Natural killer cell (primary cell): ENCODE measurements at regions of chr15 and their contacts with region 1.

Region 1: DNA sequence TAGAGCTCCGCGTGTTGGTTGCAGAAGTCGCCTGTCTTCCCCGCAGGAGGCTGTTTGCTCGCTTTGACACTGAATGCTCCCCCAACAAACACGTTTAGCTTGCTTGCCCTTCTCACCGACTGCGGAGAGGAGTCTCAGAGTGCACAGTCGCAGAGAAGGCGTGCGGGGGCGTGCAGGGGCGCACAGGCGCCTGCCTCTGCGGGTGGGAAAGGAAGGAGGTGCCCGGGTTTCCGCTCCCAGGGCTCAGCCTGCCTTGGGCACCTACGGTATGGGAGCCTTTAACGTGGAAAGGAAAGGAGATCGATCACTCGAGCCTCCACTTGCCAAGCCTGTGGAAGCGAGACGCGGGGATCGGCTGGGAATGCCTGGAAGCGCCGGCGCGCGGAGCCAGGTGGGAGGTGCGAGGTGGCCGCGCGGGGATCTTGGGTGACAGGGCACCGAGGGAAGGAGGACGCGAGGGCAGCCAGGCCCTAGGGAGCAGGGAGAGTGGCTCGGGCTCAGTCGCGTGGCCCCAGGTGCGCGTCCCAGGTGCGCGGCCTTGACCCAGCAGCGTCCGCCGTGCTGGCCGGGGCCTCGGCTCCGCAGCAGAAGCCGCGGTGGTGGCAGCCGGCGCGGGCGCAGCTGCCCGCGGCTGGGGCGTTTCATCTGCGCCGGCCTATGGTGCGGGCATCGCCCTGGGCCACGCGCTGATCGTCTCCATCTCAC is at the start of gene FAN1:
- DNase-seq: peak; percentile 37 to 81
- ATAC-seq: peak; percentile 84 to 85 (median 85)
- H3K4me3 ChIP-seq: peak within 1 kb of the TSS; percentile 53
- H3K4me3 Mint-ChIP-seq: peak within 1 kb of the TSS; percentile 100
- H3K27ac ChIP-seq: peak within 1 kb of the TSS; percentile 27
- H3K27ac Mint-ChIP-seq: peak within 1 kb of the TSS; percentile 79 to 95
- H3K4me1 ChIP-seq: peaks cover 8% of the 10 kb centered on the region
- H3K4me1 Mint-ChIP-seq: peaks cover 34% of the 10 kb centered on the region in 2 donors
- H3K27me3 ChIP-seq: no peaks in the 10 kb centered on the region
- H3K27me3 Mint-ChIP-seq: peaks cover 0 to 8% of the 10 kb centered on the region in 2 donors
- CTCF ChIP-seq: no peak
- total RNA-seq, gene FAN1: 9.1 to 18.8 (median 15.3) TPM

Region 2: DNA sequence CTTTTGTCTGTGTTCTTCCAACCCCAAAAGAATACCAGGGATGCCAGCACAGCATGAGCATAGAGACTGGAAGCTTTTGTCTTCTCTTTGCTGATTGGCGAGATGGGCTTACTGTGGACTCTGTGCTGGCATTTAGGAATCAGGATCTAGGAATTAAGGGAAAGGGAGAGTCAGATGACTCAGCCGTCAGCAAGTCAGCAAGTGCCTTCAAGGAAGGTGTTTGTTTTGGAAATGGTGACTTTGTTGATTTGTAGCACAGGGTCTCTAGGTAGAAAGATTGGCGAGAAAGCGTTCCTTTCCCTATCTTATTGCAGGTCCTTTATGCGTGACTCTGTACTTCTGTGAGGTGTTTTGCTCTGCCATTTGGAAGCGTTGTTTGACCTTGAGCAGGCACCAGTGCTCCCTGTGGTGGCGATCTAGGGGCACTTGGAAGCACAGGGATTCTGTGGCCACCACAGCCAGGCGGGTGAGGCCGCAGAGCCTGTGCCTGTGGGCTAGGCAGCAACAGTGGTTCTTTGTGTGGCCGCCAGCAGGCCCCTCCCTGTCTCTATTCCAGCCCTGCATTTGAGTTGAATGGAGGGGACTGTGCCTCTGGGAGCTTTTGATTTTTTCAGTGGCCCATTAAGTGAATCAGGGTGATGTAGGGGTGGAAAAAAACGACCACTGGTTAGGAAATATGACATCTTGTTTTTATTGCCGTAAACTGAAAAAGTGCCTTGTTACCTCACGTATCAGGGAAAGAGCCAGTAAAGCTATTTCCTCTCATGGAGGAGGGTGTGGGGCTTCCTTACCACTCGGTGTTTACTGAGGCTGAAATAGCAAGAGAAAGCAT is 19.0 kb after region 1 on chr15:
- intact Hi-C with region 1: no loop called
- DNase-seq: no peak
- ATAC-seq: no peak
- H3K4me3 ChIP-seq: no peak overlapping the region
- H3K4me3 Mint-ChIP-seq: no peak overlapping the region
- H3K27ac ChIP-seq: no peak overlapping the region
- H3K27ac Mint-ChIP-seq: no peak overlapping the region
- H3K4me1 ChIP-seq: no peaks in the 10 kb centered on the region
- H3K4me1 Mint-ChIP-seq: no peaks in the 10 kb centered on the region
- H3K27me3 ChIP-seq: no peaks in the 10 kb centered on the region
- H3K27me3 Mint-ChIP-seq: no peaks in the 10 kb centered on the region
- CTCF ChIP-seq: no peak

Region 3: DNA sequence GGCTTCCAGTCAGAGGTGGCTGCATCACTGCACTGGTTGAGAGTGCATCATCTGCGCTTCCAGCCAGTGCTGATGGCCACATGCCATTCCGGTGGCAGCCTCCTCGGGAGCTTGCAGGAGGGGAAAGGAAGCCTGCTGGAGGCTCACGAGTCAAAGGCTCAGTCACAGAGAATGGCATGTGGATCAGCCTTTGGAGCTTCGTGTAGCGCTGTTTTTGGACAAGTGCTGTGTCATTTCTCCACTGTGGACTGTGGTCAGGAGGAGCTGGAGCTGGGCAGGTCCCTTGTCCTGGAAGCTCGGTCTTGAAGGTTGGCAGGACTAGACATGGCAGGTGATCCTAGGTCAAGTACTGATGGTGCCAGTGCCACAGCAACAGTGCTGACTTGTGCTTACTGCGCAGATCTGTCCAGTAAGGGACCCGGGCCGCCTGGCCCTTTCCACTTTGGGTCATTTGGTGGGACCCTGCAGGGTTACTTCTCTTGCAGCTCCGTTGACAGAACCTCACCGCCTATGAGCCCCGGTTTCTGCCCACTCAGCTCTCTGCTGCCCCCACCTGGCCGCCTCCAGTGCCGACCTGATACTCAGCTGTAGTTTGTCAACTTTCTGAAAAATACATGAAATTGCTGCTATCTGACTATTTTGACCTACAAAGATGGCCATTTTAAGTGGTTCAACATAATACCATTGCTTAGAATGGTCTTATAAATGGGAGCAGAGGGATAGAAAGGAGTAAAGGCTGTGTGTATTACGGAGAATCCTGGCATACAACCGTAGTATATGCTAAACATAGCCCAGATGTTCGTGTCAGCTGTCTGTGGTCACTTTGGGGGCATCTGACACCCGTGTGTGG is 225.5 kb after region 1 on chr15:
- intact Hi-C with region 1: loop called (anchors 10 kb)
- DNase-seq: peak; percentile 79 to 80
- ATAC-seq: peak; percentile 84 to 99 (median 99)
- H3K4me3 ChIP-seq: no peak overlapping the region
- H3K4me3 Mint-ChIP-seq: no peak overlapping the region
- H3K27ac ChIP-seq: no peak overlapping the region
- H3K27ac Mint-ChIP-seq: no peak overlapping the region
- H3K4me1 ChIP-seq: peaks cover 7% of the 10 kb centered on the region
- H3K4me1 Mint-ChIP-seq: peaks cover 14 to 17% of the 10 kb centered on the region in 2 donors
- H3K27me3 ChIP-seq: no peaks in the 10 kb centered on the region
- H3K27me3 Mint-ChIP-seq: peaks cover 0 to 4% of the 10 kb centered on the region in 2 donors
- CTCF ChIP-seq: peak; percentile 97

Region 4: DNA sequence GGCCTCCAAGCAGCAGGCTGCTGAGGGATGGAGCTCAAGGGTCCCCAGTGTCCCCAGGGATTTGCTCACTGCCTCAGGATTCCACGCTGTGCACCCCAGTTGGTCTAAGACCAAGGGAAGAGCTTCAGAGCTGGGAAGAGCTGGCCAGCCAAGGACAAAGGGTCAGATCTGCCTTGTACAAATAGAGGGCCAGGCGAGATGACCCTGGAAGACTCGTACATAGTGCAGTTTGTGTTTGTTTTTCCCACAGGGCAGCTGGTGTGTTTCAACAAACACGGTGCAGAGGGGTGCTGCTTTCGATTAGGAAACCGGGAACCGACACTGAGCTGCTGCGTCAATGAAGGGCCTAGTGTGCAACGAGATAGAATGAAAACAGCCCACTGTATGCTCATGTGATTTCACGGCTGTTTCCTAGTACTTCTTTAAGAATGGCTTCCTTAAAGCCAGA is 254.0 kb after region 1 on chr15:
- intact Hi-C with region 1: no loop called
- DNase-seq: no peak
- ATAC-seq: no peak
- H3K4me3 ChIP-seq: no peak overlapping the region
- H3K4me3 Mint-ChIP-seq: no peak overlapping the region
- H3K27ac ChIP-seq: no peak overlapping the region
- H3K27ac Mint-ChIP-seq: no peak overlapping the region
- H3K4me1 ChIP-seq: no peaks in the 10 kb centered on the region
- H3K4me1 Mint-ChIP-seq: peaks cover 8 to 12% of the 10 kb centered on the region in 2 donors
- H3K27me3 ChIP-seq: no peaks in the 10 kb centered on the region
- H3K27me3 Mint-ChIP-seq: no peaks in the 10 kb centered on the region
- CTCF ChIP-seq: no peak